AG04450 (cell line): ENCODE measurements at regions of chr5 and their contacts with region 1.

Region 1: DNA sequence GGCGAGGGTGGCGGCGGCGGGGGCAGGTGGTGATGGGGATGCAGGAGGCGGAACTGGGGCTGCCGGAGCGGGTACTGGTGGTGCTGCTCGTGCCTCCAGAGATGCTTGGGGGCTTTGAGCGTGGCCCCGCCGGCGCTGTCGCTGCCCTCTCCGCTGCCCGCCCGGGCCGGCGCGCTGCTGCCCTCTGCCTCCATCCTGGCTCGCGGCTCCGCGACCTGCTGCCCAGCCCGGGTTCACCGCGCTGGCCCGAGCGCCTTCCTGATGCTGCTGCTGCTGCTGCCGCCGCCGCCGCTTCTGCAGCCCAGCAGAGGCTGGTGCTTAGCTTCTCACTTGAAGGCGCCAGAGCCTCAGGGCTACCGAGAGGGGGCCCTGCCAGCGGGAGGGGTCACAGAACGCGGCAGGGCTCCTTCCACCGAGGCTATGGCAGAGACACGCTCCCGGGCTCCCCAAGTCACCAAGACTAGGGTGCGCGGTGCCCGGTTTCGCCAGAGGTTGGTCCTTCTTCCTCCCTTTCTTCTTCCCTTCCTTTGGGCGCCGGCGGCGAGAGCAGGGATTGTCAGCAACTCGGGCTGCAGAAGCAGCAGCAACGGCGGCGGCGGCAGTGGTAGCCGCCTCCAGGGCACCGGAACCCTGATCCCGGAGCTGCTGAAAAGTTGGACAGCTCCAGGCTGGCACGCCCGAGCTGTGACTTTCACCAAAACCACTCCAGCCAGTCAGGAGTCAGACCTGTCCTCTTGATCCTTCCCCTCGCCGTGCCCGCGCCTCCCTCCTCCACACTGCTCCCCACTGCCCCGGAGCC is at the start of gene PDE4D:
- DNase-seq: no peak
- H3K4me3 ChIP-seq: peak within 1 kb of the TSS; percentile 27; the same call in 1 of the 2 replicates
- H3K27ac ChIP-seq: no peak within 1 kb of the TSS
- H3K27me3 ChIP-seq: peaks cover 26% of the 10 kb centered on the region
- CTCF ChIP-seq: no peak
- polyA plus RNA-seq, gene PDE4D: 8.9 and 12.0 TPM in 2 replicates

Region 2: GRCh38 chr5:59873113-59873512 is 20.5 kb before region 1 on chr5:
- CTCF ChIA-PET with region 1: interaction called, 14 read pairs
- POLR2A ChIA-PET with region 1: no interaction called
- DNase-seq: peak; percentile 10
- H3K4me3 ChIP-seq: no peak overlapping the region
- H3K27ac ChIP-seq: peak overlapping the region; percentile 47
- H3K27me3 ChIP-seq: no peaks in the 10 kb centered on the region
- CTCF ChIP-seq: no peak